WTC11 (cell line): ENCODE measurements at regions of chr6 and their contacts with region 1.

Region 1: DNA sequence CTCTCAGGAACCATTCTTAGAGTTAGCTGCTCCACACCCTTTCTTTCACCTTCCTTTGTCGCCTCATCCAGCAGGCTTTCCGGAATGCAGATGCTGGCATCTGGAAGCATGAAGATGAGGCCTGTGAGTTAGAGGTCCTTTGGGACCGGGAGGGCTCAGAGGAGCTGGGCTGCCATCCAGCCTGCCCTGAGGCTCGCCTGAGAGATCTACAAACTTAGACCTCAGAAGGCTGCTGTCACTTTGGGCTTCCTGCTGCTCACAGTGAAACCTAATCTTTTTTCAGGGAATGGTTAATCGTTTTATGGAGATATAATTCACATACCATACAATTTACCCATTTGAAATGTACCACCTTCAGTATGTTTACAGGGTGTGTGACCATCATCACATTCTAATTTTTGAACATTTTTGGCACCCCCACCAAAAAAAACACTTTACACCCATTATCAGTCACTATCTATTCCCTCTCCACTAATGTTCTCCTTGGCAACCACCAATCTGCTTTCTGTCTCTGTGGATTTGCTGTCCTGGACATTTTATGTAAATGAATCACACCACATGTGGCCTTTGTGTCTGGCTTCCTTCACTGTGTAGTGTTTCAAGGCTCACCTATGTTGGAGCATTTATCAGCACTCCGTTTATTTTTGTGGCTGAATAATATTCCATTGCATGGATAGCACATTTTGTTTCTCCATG is 20.0 kb upstream of the MPC1 start:
- DNase-seq: no peak
- ATAC-seq: no peak
- H3K4me3 Mint-ChIP-seq: no peak overlapping the region
- H3K27ac Mint-ChIP-seq: no peak overlapping the region
- H3K4me1 Mint-ChIP-seq: peaks cover 9% of the 10 kb centered on the region
- H3K27me3 Mint-ChIP-seq: peaks cover 5% of the 10 kb centered on the region
- CTCF ChIP-seq: no peak

Region 2: GRCh38 chr6:166281104-166281503 is 121.6 kb before region 1 on chr6:
- CTCF ChIA-PET with region 1: interaction called, 57 read pairs
- POLR2A ChIA-PET with region 1: no interaction called
- DNase-seq: no peak
- ATAC-seq: no peak
- H3K4me3 Mint-ChIP-seq: no peak overlapping the region
- H3K27ac Mint-ChIP-seq: no peak overlapping the region
- H3K4me1 Mint-ChIP-seq: no peaks in the 10 kb centered on the region
- H3K27me3 Mint-ChIP-seq: peaks cover 6% of the 10 kb centered on the region
- CTCF ChIP-seq: no peak

Region 3: GRCh38 chr6:166308033-166308768 is 94.5 kb before region 1 on chr6 and contains the start of gene PRR18:
- CTCF ChIA-PET with region 1: interaction called, 36 read pairs
- POLR2A ChIA-PET with region 1: no interaction called
- DNase-seq: peak; percentile 42
- ATAC-seq: peak; percentile 40
- H3K4me3 Mint-ChIP-seq: peak within 1 kb of the TSS; percentile 56
- H3K27ac Mint-ChIP-seq: no peak within 1 kb of the TSS
- H3K4me1 Mint-ChIP-seq: peaks cover 8% of the 10 kb centered on the region
- H3K27me3 Mint-ChIP-seq: peaks cover 61% of the 10 kb centered on the region
- CTCF ChIP-seq: no peak
- total RNA-seq, gene PRR18: 0.16 to 0.52 TPM (median 0.39 TPM) in 3 replicates

Region 4: DNA sequence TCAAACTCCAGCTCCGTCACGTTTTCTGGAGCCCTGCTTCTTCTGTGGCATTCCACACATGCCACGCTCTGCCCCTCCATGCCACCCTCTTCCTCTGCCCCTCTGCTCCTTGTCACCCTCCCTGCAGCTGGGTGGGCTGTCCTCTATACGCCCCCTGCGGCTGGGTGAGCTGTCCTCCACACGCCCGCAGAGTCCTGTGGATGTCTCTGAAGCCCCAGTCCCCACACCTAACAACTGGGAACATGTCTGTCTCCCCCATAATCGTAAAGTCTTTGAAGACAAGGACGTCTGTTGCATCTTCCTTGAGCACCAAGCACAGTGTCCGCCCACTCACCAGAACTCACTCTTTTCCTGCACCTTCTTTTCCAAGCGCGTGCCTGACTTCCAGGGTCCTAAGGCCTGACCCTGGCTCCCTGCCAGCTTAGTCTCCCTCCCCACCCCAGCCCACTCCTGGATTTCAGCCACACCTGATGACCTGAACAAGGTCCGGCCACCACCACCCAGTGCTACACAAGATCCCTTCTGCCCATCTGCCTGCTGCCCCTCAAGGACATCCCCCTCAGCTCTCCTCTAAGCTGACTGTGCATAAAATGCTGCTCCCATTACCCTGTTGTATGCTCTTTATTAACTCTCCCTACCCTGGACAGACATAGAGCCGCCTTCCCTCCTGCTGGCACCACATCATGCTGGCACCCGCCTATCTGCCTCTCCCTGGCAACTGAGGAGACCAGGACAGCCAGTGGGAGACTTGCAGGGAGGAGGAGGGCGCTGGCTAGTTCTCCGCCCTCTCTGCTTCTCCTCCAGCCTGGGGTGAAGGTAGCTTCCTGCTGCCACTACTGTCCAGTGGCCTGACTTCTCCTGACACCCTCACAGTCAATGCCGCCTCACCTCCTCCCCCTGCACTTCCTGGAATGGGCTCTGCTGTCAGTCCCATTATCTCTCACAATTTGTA is 83.8 kb before region 1 on chr6:
- CTCF ChIA-PET with region 1: interaction called, 36 read pairs
- POLR2A ChIA-PET with region 1: no interaction called
- DNase-seq: no peak
- ATAC-seq: peak; percentile 48
- H3K4me3 Mint-ChIP-seq: no peak overlapping the region
- H3K27ac Mint-ChIP-seq: peak overlapping the region; percentile 74
- H3K4me1 Mint-ChIP-seq: peaks cover 16% of the 10 kb centered on the region
- H3K27me3 Mint-ChIP-seq: no peaks in the 10 kb centered on the region
- CTCF ChIP-seq: no peak

Region 5: DNA sequence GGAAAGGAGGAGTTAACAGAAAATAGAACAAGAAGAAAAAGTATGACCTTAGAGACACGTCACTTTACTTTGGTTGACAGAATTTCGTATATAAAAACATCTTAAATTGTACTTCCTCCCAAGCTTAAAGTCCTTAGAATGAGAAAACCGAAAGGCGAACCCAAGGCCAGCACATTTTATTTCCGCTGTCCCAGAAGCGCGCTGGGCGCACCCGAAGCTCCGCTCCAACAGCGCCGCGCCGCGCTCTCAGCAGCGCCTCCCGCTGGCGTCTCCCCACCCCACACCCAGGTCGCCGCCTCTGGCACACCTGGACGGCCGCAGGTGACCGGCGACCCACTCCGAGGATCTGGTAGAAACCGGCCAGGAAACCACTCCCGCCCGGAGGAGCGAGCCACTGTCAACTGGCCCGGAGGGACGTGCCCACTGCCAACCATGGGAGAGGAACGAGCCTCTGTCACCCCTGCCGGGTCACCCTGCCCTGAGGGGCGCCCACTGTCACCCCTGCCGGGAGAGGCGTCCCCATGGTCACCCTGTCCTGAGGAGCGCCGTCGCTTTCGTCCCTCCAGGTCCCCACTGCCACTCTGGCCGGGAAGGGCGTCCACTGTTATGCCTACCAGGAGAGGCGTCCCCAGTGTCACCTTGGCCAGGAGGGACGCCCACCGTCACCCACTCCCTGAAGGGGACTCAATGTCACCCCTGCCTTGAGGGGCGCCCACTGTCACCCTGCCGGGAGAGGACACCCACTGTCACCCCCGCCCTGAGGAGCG is 20.8 kb before region 1 on chr6:
- CTCF ChIA-PET with region 1: interaction called, 11 read pairs
- POLR2A ChIA-PET with region 1: interaction called, 5 read pairs
- DNase-seq: peak; percentile 87
- ATAC-seq: peak; percentile 50
- H3K4me3 Mint-ChIP-seq: peak overlapping the region; percentile 79
- H3K27ac Mint-ChIP-seq: peak overlapping the region; percentile 36; the same call in 1 of the 2 replicates
- H3K4me1 Mint-ChIP-seq: peaks cover 8% of the 10 kb centered on the region
- H3K27me3 Mint-ChIP-seq: no peaks in the 10 kb centered on the region; the same call in 1 of the 2 replicates
- CTCF ChIP-seq: peak; percentile 81

Region 6: DNA sequence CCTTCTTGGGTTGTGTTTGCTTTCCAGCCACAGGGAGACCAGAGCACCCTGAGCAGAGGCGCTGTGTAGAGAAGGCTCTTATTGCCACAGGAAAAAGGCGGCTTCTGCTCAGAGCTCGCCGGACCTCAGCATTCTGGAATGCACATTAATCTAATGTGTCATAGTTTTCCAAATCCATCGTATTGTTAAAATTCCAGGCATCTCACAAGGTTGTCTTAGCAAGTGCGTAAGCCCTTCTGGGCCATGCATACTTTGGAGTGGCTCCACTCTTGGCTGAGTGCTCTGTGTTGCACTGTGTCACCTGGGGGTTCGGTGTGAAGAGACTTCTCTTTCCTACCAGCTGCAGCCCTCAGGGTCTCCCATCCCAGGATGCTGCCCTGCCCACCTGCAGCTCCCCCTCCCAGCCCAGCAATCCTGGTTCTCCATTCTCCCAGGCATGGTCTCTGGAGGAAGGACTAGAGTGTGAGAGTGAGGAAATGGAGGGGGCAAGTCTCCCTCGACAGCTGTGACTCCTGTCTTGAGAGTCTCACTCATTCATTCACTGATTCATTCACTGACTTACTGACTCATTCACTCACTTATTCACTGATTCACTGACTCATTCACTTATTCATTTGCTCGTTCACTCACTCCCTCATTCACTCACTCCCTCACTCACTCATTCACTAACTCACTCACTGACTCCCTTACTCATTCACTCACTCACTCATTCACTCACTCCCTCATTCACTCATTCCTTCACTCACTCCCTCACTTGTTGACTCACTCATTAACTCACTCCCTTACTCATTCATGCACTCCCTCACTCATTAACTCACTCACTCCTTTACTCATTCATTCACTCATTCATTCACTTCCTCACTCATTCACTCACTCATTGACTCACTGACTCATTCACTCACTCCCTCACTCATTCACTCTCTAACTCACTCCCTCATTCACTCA is 63.7 kb after region 1 on chr6:
- CTCF ChIA-PET with region 1: no interaction called
- POLR2A ChIA-PET with region 1: no interaction called
- DNase-seq: no peak
- ATAC-seq: no peak
- H3K4me3 Mint-ChIP-seq: no peak overlapping the region
- H3K27ac Mint-ChIP-seq: 0 out of 2 replicates have a peak overlapping the region, but pooled peaks have one; percentile 10
- H3K4me1 Mint-ChIP-seq: no peaks in the 10 kb centered on the region
- H3K27me3 Mint-ChIP-seq: no peaks in the 10 kb centered on the region
- CTCF ChIP-seq: no peak

Region 7: GRCh38 chr6:166515072-166515810 is 112.5 kb after region 1 on chr6:
- CTCF ChIA-PET with region 1: no interaction called
- POLR2A ChIA-PET with region 1: no interaction called
- DNase-seq: no peak
- ATAC-seq: no peak
- H3K4me3 Mint-ChIP-seq: no peak overlapping the region
- H3K27ac Mint-ChIP-seq: no peak overlapping the region
- H3K4me1 Mint-ChIP-seq: peaks cover 5% of the 10 kb centered on the region
- H3K27me3 Mint-ChIP-seq: no peaks in the 10 kb centered on the region
- CTCF ChIP-seq: no peak